A549 (cell line): ENCODE measurements at regions of chr17 and their contacts with region 1.

Region 1: GRCh38 chr17:19753049-19753444 is 4.9 kb upstream of the ALDH3A1 start:
- DNase-seq: peak; percentile 98 to 99
- ATAC-seq: peak; percentile 83 to 90
- H3K4me3 ChIP-seq: no peak overlapping the region; the same call in 2 of the 3 replicates
- H3K27ac ChIP-seq: peak overlapping the region; percentile 98 to 100
- H3K4me1 ChIP-seq: peaks cover 65% of the 10 kb centered on the region
- CTCF ChIP-seq: no peak
- EP300 ChIP-seq: peak; percentile 87 to 96; a peak in 4 of 5 replicates
- POLR2A ChIP-seq: peak; percentile 54
- RAD21 ChIP-seq: peak in 1 of 2 experiments; percentile 41; a peak in 2 of 5 replicates

Region 2: DNA sequence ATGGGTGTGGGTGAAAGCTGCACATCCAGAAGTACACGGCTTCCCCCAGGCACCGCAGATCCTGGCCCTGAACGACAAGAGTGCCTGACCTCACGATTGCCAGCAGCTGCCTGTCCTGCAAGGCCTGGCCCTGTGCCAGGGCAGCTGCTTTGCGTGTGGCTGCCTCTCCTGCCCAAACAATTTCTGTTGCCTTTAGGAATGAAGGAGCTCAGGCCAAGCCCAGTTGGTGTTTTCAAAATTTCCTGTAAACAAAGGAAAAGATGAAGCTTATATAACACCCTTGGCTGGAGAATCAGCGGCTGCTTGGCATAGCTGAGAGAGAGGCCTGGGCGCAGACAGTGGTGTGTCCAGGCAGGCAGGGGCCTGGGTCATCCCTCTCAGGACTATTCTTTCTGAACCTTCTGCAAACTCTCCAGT is 25.0 kb before region 1 on chr17:
- CTCF ChIA-PET with region 1: interaction called, 145 read pairs
- POLR2A ChIA-PET with region 1: interaction called, 9 read pairs
- DNase-seq: peak in 1 of 2 experiments; percentile 69
- ATAC-seq: peak; percentile 52 to 54; a peak in 5 of 6 replicates
- H3K4me3 ChIP-seq: no peak overlapping the region
- H3K27ac ChIP-seq: peak overlapping the region; percentile 67 to 82
- H3K4me1 ChIP-seq: peaks cover 35% of the 10 kb centered on the region
- CTCF ChIP-seq: no peak
- EP300 ChIP-seq: no peak
- POLR2A ChIP-seq: no peak
- RAD21 ChIP-seq: no peak